Activated CD8-positive, alpha-beta T cell treated with anti-CD3 and anti-CD28 coated beads, Interleukin-2, amount 10 ng/mL, durations not matched to agents 7 days and 5 days (primary cell): ENCODE measurements at regions of chr6 and their contacts with region 1.

Region 1: DNA sequence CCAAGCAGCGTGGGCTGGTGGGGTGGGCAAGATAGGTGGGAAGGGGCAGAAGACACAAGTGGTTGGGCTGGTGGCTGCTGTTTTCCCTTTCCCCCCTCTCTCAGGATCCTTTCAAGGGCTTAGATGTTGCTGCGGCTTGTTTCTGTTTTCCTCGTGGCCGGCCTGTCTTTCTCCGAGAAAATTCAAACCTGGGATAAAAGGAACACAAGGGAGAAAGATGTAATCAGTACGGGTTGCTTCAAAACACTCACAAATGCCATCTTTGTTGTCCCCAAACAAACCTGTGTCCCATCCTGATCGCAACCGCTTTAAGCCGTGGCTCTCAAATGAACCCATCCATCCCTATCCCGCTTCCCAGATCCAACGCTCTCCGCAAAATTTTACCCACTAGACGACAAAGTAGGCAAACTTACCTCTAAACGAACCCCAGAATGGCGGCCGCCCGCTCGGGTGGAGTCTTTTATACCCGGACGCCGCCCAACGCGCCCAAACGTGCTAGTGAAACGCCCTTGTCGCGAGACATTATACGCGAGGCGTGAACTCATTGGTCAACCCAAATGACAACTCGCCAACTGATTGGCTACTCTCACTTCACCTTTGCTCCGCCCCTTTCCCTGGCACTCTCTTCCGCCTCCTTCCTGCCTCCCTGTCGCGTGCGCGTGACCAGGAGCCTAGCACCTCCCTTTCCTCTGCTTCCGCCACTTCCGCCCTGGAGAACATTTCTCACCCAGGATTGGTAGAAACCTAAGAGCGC is at the start of gene PPP1R10:
- DNase-seq: peak; percentile 100
- ATAC-seq: peak; percentile 78
- H3K4me3 Mint-ChIP-seq: peak within 1 kb of the TSS; percentile 93
- H3K27ac Mint-ChIP-seq: peak within 1 kb of the TSS; percentile 98
- H3K4me1 Mint-ChIP-seq: peaks cover 38% of the 10 kb centered on the region
- H3K27me3 Mint-ChIP-seq: peaks cover 2% of the 10 kb centered on the region
- total RNA-seq, gene PPP1R10: 92.8 to 99.7 TPM

Region 2: GRCh38 chr6:28985462-28986164 is 1631.4 kb before region 1 on chr6:
- CTCF ChIA-PET with region 1: no interaction called
- POLR2A ChIA-PET with region 1: no interaction called
- DNase-seq: peak; percentile 36
- ATAC-seq: no peak
- H3K4me3 Mint-ChIP-seq: peak overlapping the region; percentile 62
- H3K27ac Mint-ChIP-seq: no peak overlapping the region
- H3K4me1 Mint-ChIP-seq: peaks cover 56% of the 10 kb centered on the region
- H3K27me3 Mint-ChIP-seq: peaks cover 48% of the 10 kb centered on the region

Region 3: DNA sequence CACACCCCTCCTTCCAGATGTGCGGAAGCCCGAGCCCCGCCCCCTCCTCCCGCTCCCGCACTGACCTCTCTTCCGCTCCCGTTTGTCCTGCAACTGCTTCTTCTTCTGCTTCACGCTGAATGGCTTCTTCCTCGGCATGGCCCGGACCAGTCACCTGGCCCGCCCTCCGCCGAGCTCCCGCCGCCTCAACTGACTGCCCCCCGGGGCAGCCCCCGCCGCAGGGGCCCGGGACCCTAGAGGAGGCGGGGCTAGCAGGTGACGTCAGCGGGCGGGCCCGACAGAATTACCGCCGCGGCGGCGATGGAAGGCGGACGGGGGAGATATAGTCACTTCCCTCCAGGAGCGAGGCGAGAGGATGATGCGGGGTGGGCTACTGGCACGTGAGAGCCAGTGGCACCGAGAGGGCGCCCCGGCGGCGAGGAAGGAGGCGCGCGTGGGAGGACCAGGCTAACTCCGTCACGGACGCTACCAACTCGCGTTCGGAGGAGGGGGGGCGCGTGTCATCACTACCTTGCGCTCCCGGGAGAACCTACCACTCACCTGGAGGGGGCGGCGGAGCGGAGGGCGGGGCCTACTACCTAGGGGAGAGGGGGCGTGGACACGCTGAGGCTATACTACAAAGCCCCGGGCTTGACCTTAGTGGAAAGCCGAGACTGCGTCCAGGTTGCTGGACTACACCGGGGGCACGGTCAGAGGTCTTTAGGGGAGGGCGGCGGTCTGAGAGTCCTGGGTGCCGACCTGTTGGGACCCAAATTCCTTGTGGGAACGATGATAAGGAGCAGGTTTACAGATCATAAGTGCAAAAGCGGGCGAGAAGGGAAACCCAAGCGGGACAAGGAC is 60.7 kb before region 1 on chr6 and contains the start of gene GNL1:
- CTCF ChIA-PET with region 1: interaction called, 3 read pairs
- POLR2A ChIA-PET with region 1: interaction called, 18 read pairs
- DNase-seq: peak; percentile 99
- ATAC-seq: peak; percentile 90
- H3K4me3 Mint-ChIP-seq: peak within 1 kb of the TSS; percentile 96
- H3K27ac Mint-ChIP-seq: peak within 1 kb of the TSS; percentile 96
- H3K4me1 Mint-ChIP-seq: peaks cover 30% of the 10 kb centered on the region
- H3K27me3 Mint-ChIP-seq: no peaks in the 10 kb centered on the region
- total RNA-seq, gene GNL1: 63.7 to 69.9 TPM

Region 4: DNA sequence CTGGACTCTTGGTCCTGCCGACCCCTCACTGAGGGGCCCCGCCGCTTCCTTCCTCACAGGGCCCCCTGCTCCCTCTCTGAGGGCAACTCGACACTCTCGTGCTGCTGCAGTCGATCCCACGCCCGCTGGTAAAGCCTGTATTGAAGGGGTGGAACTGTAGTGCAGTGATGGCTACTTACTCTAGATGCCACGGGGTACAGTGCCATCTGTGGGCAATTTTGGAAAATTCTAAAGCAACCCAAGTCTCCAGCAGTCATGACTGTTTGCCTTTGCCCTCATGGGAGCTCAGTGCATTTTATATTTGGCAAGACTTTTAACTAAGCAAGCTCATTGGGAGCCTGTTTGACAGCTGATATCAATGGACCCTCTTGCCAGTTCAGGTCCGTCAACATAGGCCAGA is 23.5 kb after region 1 on chr6:
- CTCF ChIA-PET with region 1: interaction called, 6 read pairs
- POLR2A ChIA-PET with region 1: interaction called, 12 read pairs
- DNase-seq: no peak
- ATAC-seq: peak; percentile 57
- H3K4me3 Mint-ChIP-seq: no peak overlapping the region
- H3K27ac Mint-ChIP-seq: peak overlapping the region; percentile 83
- H3K4me1 Mint-ChIP-seq: peaks cover 25% of the 10 kb centered on the region
- H3K27me3 Mint-ChIP-seq: no peaks in the 10 kb centered on the region

Region 5: GRCh38 chr6:30678964-30679726 is 62.2 kb after region 1 on chr6:
- CTCF ChIA-PET with region 1: interaction called, 10 read pairs
- POLR2A ChIA-PET with region 1: interaction called, 20 read pairs
- DNase-seq: peak; percentile 94
- ATAC-seq: peak; percentile 54
- H3K4me3 Mint-ChIP-seq: peak overlapping the region; percentile 93
- H3K27ac Mint-ChIP-seq: peak overlapping the region; percentile 98
- H3K4me1 Mint-ChIP-seq: peaks cover 30% of the 10 kb centered on the region
- H3K27me3 Mint-ChIP-seq: no peaks in the 10 kb centered on the region

Region 6: DNA sequence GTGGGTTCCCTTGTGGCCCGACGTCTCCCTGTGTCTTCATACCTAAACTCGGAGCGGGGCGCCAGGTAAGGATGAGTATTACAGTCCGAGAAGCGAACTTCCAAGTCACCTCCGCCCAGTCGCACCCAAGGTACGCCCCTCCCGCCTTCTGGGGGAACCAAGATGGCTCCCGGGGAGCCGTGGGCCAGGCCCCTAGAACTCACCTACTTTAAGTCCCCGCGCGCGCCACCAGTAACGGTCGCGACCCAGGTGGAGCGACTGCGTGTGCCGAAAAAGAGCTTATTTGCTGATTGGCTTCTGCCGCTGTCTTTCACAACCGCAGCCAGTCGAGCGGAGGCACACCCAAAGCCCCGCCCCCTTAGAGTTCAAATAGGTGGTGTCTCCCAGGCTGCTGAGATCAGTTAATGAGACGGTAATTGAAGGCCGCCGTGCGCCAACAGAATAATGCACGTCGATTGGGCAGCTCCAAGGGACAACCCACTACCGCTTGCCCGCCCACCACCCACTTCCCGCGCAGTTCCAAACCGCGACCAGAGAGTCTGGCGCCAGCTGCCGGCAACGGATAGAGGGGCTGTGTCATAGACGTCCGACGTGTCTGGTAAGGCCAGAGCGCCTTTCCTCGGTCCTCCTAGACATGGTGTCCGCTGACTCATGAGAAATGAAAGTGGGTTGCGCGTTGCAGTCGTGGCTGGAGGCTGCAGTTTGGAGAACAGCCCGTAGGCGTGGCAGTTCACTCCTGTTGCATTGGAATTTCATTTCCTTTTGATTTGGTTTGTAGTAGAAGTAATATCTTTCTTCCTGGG is 100.3 kb after region 1 on chr6 and contains the start of gene MDC1:
- CTCF ChIA-PET with region 1: interaction called, 9 read pairs
- POLR2A ChIA-PET with region 1: interaction called, 44 read pairs
- DNase-seq: peak; percentile 100
- ATAC-seq: peak; percentile 81
- H3K4me3 Mint-ChIP-seq: peak within 1 kb of the TSS; percentile 98
- H3K27ac Mint-ChIP-seq: peak within 1 kb of the TSS; percentile 100
- H3K4me1 Mint-ChIP-seq: peaks cover 64% of the 10 kb centered on the region
- H3K27me3 Mint-ChIP-seq: no peaks in the 10 kb centered on the region
- total RNA-seq, gene MDC1: 48.5 to 52.4 TPM

Region 7: DNA sequence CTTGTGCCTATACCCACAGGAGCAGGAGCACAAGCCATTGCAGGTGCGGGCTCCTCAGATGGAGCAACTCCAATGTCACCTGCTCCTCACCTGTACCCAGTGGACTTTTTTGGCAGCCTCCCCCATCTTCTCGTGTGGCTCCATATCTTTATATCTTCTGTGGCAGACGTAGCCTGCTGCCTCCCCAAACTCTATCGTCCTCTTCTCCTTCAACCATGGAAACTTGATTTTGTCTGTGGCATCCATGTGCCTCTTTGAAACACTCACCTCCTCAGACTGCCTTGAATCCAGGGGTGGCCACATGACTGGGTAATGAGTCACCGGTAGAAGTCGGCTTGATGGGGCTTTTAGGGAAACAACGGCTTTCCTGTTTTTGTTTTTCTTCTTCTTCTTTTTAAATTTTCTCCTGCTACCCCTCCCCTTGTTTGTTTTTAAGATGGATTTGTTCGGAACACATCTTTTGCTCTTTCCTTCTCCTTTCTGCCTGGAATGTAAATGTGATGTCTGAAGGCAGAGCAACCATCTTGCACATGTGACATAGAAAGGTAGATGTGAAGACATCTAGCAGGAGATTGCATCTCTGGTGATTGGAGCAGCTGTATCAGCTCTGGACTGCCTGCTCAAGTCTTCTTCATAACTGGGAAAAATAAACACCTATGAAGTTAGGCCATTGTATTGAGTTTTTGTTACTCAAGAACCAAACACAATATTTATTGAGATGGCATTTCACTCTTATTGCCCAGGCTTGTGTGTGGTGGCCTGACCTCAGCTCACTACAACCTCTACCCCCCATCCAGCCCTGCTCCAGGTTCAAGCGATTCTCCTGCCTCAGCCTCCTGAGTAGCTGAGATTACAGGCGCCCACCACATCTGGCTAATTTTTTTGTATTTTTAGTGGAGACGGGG is 197.4 kb after region 1 on chr6:
- CTCF ChIA-PET with region 1: no interaction called
- POLR2A ChIA-PET with region 1: no interaction called
- DNase-seq: peak; percentile 62
- ATAC-seq: peak; percentile 77
- H3K4me3 Mint-ChIP-seq: no peak overlapping the region
- H3K27ac Mint-ChIP-seq: peak overlapping the region; percentile 84
- H3K4me1 Mint-ChIP-seq: peaks cover 78% of the 10 kb centered on the region
- H3K27me3 Mint-ChIP-seq: no peaks in the 10 kb centered on the region

Region 8: GRCh38 chr6:30877419-30878371 is 260.7 kb after region 1 on chr6:
- CTCF ChIA-PET with region 1: no interaction called
- POLR2A ChIA-PET with region 1: no interaction called
- DNase-seq: peak; percentile 85
- ATAC-seq: peak; percentile 90
- H3K4me3 Mint-ChIP-seq: peak overlapping the region; percentile 68
- H3K27ac Mint-ChIP-seq: peak overlapping the region; percentile 72
- H3K4me1 Mint-ChIP-seq: peaks cover 26% of the 10 kb centered on the region
- H3K27me3 Mint-ChIP-seq: peaks cover 6% of the 10 kb centered on the region

Region 9: GRCh38 chr6:32153564-32154513 is 1536.9 kb after region 1 on chr6 and contains the start of gene PPT2:
- CTCF ChIA-PET with region 1: no interaction called
- POLR2A ChIA-PET with region 1: no interaction called
- DNase-seq: peak; percentile 90
- ATAC-seq: peak; percentile 65
- H3K4me3 Mint-ChIP-seq: peak within 1 kb of the TSS; percentile 94
- H3K27ac Mint-ChIP-seq: peak within 1 kb of the TSS; percentile 89
- H3K4me1 Mint-ChIP-seq: peaks cover 48% of the 10 kb centered on the region
- H3K27me3 Mint-ChIP-seq: peaks cover 19% of the 10 kb centered on the region
- total RNA-seq, gene PPT2: 15.4 to 17.1 TPM